ENCODE measurements at regions of chr15 and their contacts with region 1.

Region 1: GRCh38 chr15:63600616-63601025 is 3.4 kb downstream of the FBXL22 start:
- DNase-seq: peak; percentile 67
- ATAC-seq: peak; percentile 60
- H3K4me3 Mint-ChIP-seq: peak overlapping the region; percentile 83
- H3K27ac Mint-ChIP-seq: no peak overlapping the region
- H3K4me1 Mint-ChIP-seq: peaks cover 21% of the 10 kb centered on the region
- H3K27me3 Mint-ChIP-seq: peaks cover 28% of the 10 kb centered on the region
- CTCF ChIP-seq: no peak

Region 2: GRCh38 chr15:63006032-63006878 is 594.4 kb before region 1 on chr15:
- CTCF ChIA-PET with region 1: no interaction called
- POLR2A ChIA-PET with region 1: no interaction called
- DNase-seq: no peak
- ATAC-seq: no peak
- H3K4me3 Mint-ChIP-seq: no peak overlapping the region
- H3K27ac Mint-ChIP-seq: no peak overlapping the region
- H3K4me1 Mint-ChIP-seq: peaks cover 8% of the 10 kb centered on the region
- H3K27me3 Mint-ChIP-seq: no peaks in the 10 kb centered on the region
- CTCF ChIP-seq: no peak

Region 3: GRCh38 chr15:63495780-63496488 is 104.7 kb before region 1 on chr15:
- CTCF ChIA-PET with region 1: interaction called, 12 read pairs
- POLR2A ChIA-PET with region 1: no interaction called
- DNase-seq: no peak
- ATAC-seq: no peak; the same call in 1 of the 2 replicates
- H3K4me3 Mint-ChIP-seq: no peak overlapping the region
- H3K27ac Mint-ChIP-seq: no peak overlapping the region; the same call in 1 of the 2 replicates
- H3K4me1 Mint-ChIP-seq: peaks cover 60% of the 10 kb centered on the region
- H3K27me3 Mint-ChIP-seq: peaks cover 30% of the 10 kb centered on the region
- CTCF ChIP-seq: no peak

Region 4: DNA sequence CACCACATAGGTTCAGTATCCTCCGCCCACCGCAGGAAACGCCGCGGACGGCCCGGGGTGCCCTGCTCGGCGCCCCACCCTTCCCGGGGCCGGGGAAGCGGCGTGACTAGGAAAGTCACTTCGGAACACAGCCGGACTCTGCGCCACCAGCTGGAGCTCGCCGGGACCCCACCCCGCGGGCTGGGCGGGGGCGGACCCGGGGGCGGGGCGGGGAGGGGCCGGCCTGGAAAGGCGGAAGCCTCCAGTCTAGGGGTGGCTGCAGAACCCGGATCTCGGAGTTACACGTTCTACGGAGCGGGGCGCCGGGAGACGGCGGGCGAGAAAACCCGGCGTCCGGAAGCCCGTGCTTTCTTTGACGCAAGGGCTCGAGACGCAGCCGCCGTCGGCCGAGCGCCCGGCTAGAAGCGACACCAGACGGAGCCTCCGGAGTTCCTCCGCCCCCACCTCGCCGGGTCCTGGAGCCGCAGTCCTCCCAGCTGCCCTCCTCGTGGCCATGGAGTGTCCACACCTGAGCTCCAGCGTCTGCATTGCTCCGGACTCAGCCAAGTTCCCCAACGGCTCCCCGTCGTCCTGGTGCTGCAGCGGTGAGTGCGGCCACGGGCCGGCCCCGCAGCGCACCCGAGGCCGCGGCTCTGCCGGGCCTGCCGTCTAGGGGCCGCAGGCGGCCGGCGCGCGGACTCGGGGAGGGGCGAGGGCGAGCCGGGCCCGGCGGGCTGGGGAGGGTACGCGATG is 96.2 kb before region 1 on chr15 and contains the start of gene USP3:
- CTCF ChIA-PET with region 1: interaction called, 43 read pairs
- POLR2A ChIA-PET with region 1: no interaction called
- DNase-seq: peak; percentile 92
- ATAC-seq: peak; percentile 68
- H3K4me3 Mint-ChIP-seq: peak within 1 kb of the TSS; percentile 76
- H3K27ac Mint-ChIP-seq: no peak within 1 kb of the TSS
- H3K4me1 Mint-ChIP-seq: peaks cover 76% of the 10 kb centered on the region
- H3K27me3 Mint-ChIP-seq: peaks cover 36% of the 10 kb centered on the region
- CTCF ChIP-seq: no peak
- total RNA-seq, gene USP3: 30.0 to 36.6 TPM (median 30.8 TPM) in 3 replicates

Region 5: GRCh38 chr15:63531586-63531985 is 69.0 kb before region 1 on chr15:
- CTCF ChIA-PET with region 1: interaction called, 18 read pairs
- POLR2A ChIA-PET with region 1: no interaction called
- DNase-seq: peak; percentile 24
- ATAC-seq: peak; percentile 95
- H3K4me3 Mint-ChIP-seq: no peak overlapping the region
- H3K27ac Mint-ChIP-seq: no peak overlapping the region
- H3K4me1 Mint-ChIP-seq: peaks cover 61% of the 10 kb centered on the region
- H3K27me3 Mint-ChIP-seq: no peaks in the 10 kb centered on the region
- CTCF ChIP-seq: peak; percentile 55

Measured in WTC11 (cell line).